Esophagus muscularis mucosa (tissue), 4 donors: ENCODE measurements at regions of chr7 and their contacts with region 1.

Region 1: DNA sequence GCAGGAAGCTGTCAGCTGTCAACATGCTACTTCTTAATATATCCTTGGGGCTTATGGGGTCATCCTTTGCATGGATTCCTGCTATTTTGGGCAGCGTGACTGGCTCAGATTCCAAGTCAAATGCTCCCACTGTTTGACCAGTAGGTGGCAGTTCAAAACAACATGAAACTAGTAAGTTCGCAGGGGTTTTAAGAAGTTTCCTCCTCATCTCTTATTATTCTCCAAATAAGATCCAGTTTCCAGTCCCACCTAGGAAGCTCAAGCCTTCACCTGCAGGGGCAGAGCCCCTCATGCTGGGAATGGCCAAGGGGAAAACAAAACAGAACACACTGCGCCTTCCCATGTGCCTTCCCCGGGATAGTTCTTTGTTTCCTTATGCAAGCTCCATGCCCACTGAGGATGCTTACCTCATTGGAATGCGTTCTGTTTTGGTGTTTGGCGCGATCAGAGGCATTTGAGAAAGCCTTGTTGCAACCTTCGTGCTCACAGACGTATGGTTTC is 259.8 kb downstream of the GLI3 start:
- DNase-seq: no peak
- H3K4me3 ChIP-seq: no peak overlapping the region
- H3K27ac ChIP-seq: peak overlapping the region in 2 of 4 donors; percentile 20 to 29
- H3K4me1 ChIP-seq: peaks cover 16 to 67% (median 55%) of the 10 kb centered on the region in 4 donors
- H3K27me3 ChIP-seq: no peaks in the 10 kb centered on the region
- CTCF ChIP-seq: peak; percentile 65 to 78 (median 77)
- EP300 ChIP-seq: no peak
- POLR2A ChIP-seq: no peak

Region 2: GRCh38 chr7:41940760-41941343 is 36.3 kb before region 1 on chr7:
- intact Hi-C with region 1: loop called (anchors 5 kb)
- DNase-seq: no peak
- H3K4me3 ChIP-seq: no peak overlapping the region
- H3K27ac ChIP-seq: no peak overlapping the region
- H3K4me1 ChIP-seq: peaks cover 9 to 35% (median 32%) of the 10 kb centered on the region in 4 donors
- H3K27me3 ChIP-seq: no peaks in the 10 kb centered on the region
- CTCF ChIP-seq: peak; percentile 85 to 92 (median 87)
- EP300 ChIP-seq: no peak
- POLR2A ChIP-seq: no peak

Region 3: DNA sequence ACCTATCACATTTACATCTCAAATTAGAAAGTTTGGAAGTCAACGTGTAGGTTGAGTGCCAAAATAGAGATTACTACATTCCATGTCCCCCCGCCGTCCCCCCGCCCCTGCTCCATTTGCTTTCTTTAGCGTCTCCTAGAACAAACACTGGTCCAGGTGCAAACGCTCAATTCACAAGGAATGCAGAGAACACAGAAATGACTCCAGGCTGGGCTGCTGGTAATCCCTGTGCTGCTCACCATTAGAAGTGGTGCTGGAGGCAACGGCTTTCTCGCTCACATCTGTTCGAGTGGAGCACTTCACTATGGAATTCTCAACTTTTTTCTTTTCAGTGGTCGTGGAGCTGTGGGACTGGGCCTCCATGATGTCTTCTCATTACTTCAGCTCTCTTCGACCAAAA is 245.7 kb after region 1 on chr7:
- intact Hi-C with region 1: no loop called
- DNase-seq: no peak
- H3K4me3 ChIP-seq: no peak overlapping the region
- H3K27ac ChIP-seq: peak overlapping the region in 3 of 4 donors; percentile 3 to 29 (median 10)
- H3K4me1 ChIP-seq: peaks cover under 1 to 38% (median 34%) of the 10 kb centered on the region in 4 donors
- H3K27me3 ChIP-seq: no peaks in the 10 kb centered on the region
- CTCF ChIP-seq: no peak
- EP300 ChIP-seq: no peak
- POLR2A ChIP-seq: no peak

Region 4: DNA sequence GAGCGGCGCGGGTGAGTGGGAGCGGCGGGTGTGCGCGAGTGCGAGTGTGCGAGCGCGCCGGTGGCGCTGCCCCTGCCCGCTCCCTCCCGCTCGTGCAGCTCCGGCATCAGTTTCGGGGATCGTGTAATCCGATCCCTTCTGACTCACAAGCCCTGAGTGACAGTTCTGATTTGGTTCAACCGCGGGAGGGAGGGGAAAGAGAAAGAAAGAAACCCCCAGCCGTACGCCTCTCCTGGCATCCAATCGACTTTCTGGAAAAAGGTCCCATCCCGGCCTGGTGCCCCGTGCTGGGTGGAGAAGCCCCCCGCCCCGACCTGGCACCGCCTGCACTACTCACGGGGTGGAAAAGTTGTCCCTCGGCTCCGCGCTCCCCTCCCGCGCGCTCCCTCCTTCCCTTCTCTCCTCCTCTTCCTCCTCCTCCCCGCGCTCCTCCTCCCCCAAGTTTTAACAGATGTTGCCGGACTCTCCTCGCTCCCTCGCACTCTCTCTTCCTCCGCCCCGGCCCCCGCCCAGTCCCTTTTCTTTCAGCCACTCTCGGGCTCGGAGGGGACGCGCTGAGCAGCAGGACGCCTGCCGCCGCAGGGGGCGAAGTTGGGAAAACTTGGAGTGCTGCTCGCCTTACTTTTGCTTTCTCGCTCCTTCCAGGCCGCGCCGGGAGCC is 260.1 kb after region 1 on chr7 and contains the start of gene GLI3:
- intact Hi-C with region 1: loop called (anchors 10 kb)
- DNase-seq: peak; percentile 96
- H3K4me3 ChIP-seq: peak within 1 kb of the TSS; percentile 79 to 93 (median 86)
- H3K27ac ChIP-seq: peak within 1 kb of the TSS; percentile 93 to 95 (median 94)
- H3K4me1 ChIP-seq: peaks cover 13 to 59% (median 54%) of the 10 kb centered on the region in 4 donors
- H3K27me3 ChIP-seq: no peaks in the 10 kb centered on the region
- CTCF ChIP-seq: peak in 2 of 3 experiments; percentile 12 to 48
- EP300 ChIP-seq: no peak
- POLR2A ChIP-seq: no peak
- total RNA-seq, gene GLI3: 11.7 to 17.8 (median 13.3) TPM

Region 5: GRCh38 chr7:42315631-42316030 is 338.4 kb after region 1 on chr7:
- intact Hi-C with region 1: no loop called
- DNase-seq: no peak
- H3K4me3 ChIP-seq: no peak overlapping the region
- H3K27ac ChIP-seq: no peak overlapping the region
- H3K4me1 ChIP-seq: no peaks in the 10 kb centered on the region
- H3K27me3 ChIP-seq: no peaks in the 10 kb centered on the region
- CTCF ChIP-seq: no peak
- EP300 ChIP-seq: no peak
- POLR2A ChIP-seq: no peak

Region 6: DNA sequence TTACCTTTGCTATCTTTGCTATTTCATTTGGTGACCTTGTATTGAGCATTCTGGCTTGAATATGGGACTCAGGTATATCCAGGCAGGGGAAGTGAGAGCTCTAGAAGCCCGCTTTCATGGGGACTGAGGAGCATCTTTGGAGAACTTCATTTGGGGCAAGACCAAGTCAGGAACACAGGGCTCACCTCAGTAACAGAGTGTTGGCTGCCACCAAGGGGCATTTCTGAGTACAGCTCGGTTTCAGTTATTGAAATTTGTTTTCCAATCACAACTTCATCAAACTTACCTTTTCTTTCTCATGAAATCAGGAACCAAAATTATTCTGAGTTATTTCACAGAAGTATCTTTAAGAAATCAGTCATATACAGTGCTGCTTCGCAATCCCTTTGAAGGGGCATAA is 597.5 kb after region 1 on chr7:
- intact Hi-C with region 1: loop called (anchors 10 kb)
- DNase-seq: no peak
- H3K4me3 ChIP-seq: no peak overlapping the region
- H3K27ac ChIP-seq: peak overlapping the region in 3 of 4 donors; percentile 13 to 49 (median 20)
- H3K4me1 ChIP-seq: peaks cover 0 to 57% (median 54%) of the 10 kb centered on the region in 4 donors
- H3K27me3 ChIP-seq: no peaks in the 10 kb centered on the region
- CTCF ChIP-seq: peak; percentile 13 to 31 (median 17)
- EP300 ChIP-seq: no peak
- POLR2A ChIP-seq: no peak

Region 7: DNA sequence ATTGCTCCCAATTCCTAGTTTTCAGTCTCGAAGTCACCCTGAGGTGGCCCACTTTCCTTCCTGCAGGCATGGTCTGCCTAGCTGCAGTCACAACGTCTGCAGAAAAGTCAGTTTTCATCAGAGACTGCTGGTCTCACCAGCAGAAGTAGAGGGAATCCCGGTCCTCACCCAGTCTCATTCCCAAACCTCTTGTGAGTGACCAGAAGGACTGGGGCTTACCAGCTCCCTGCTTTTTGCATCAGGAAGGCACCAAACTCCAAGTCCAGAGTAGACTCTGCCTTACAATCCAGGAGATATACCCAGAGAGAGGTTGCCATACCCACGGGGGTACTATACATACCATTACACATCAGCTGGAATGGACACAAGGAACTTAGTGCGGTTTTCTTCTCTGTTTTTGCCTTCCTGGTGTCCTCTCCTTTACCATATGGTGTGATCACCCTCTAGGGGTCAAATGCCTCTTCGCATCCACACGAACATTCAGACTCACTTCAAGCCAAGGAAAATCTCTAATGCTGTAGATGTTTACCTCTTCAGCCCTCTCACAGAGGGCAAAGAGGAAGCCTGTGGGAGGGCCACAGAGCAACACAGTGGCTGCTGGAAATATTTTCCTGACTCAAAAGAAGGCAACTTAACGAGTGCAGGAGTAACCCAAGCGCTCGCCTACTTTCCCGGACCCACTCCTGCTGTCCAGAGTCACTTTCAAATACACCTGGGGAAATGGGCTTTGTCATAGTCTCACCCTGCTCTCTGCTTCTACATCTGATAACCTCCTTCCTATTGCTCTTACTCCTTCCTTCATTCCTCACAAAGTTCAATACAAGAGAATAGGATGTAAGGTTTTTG is 713.8 kb after region 1 on chr7:
- intact Hi-C with region 1: loop called (anchors 5 kb)
- DNase-seq: peak; percentile 91
- H3K4me3 ChIP-seq: no peak overlapping the region
- H3K27ac ChIP-seq: peak overlapping the region in 1 of 4 donors; percentile 11
- H3K4me1 ChIP-seq: peaks cover 5 to 44% (median 36%) of the 10 kb centered on the region in 4 donors
- H3K27me3 ChIP-seq: no peaks in the 10 kb centered on the region
- CTCF ChIP-seq: peak; percentile 63 to 72 (median 66)
- EP300 ChIP-seq: no peak
- POLR2A ChIP-seq: no peak

Region 8: GRCh38 chr7:42831718-42832431 is 854.7 kb after region 1 on chr7:
- intact Hi-C with region 1: loop called (anchors 5 kb)
- DNase-seq: no peak
- H3K4me3 ChIP-seq: peak overlapping the region in 3 of 4 donors; percentile 0 to 22 (median 4)
- H3K27ac ChIP-seq: peak overlapping the region in 2 of 4 donors; percentile 25 to 54
- H3K4me1 ChIP-seq: peaks cover 5 to 31% (median 28%) of the 10 kb centered on the region in 4 donors
- H3K27me3 ChIP-seq: no peaks in the 10 kb centered on the region
- CTCF ChIP-seq: peak; percentile 72 to 79 (median 75)
- EP300 ChIP-seq: no peak
- POLR2A ChIP-seq: no peak